Transverse colon (tissue), 4 donors: ENCODE measurements at regions of chr17 and their contacts with region 1.

Region 1: GRCh38 chr17:82441691-82442487 is 8.7 kb downstream of the CYBC1 start:
- DNase-seq: no peak
- H3K4me3 ChIP-seq: no peak overlapping the region
- H3K27ac ChIP-seq: no peak overlapping the region
- H3K4me1 ChIP-seq: peaks cover 0 to 6% (median 1%) of the 10 kb centered on the region in 4 donors
- H3K27me3 ChIP-seq: no peaks in the 10 kb centered on the region
- CTCF ChIP-seq: no peak
- EP300 ChIP-seq: no peak
- POLR2A ChIP-seq: no peak

Region 2: GRCh38 chr17:82396601-82397470 is 45.1 kb before region 1 on chr17:
- in situ Hi-C with region 1: no loop called
- intact Hi-C with region 1: loop called (anchors 1 kb)
- DNase-seq: no peak
- H3K4me3 ChIP-seq: no peak overlapping the region
- H3K27ac ChIP-seq: no peak overlapping the region
- H3K4me1 ChIP-seq: peaks cover 0 to 7% (median 0%) of the 10 kb centered on the region in 4 donors
- H3K27me3 ChIP-seq: no peaks in the 10 kb centered on the region
- CTCF ChIP-seq: no peak
- EP300 ChIP-seq: no peak
- POLR2A ChIP-seq: no peak